ENCODE measurements at regions of chr2 and their contacts with region 1.

Region 1: GRCh38 chr2:223957092-223957851 is at the start of gene MRPL44:
- DNase-seq: peak; percentile 93 to 96 (median 95)
- H3K4me3 ChIP-seq: peak within 1 kb of the TSS; percentile 79 to 85
- H3K4me3 Mint-ChIP-seq: peak within 1 kb of the TSS; percentile 91 to 98 (median 96)
- H3K27ac ChIP-seq: peak within 1 kb of the TSS; percentile 80
- H3K27ac Mint-ChIP-seq: peak within 1 kb of the TSS; percentile 93 to 98 (median 96)
- H3K4me1 ChIP-seq: peaks cover 53% of the 10 kb centered on the region
- H3K4me1 Mint-ChIP-seq: peaks cover 43 to 75% (median 54%) of the 10 kb centered on the region in 4 donors
- H3K27me3 ChIP-seq: no peaks in the 10 kb centered on the region
- H3K27me3 Mint-ChIP-seq: no peaks in the 10 kb centered on the region
- total RNA-seq, gene MRPL44: 20.1 to 22.1 TPM

Region 2: DNA sequence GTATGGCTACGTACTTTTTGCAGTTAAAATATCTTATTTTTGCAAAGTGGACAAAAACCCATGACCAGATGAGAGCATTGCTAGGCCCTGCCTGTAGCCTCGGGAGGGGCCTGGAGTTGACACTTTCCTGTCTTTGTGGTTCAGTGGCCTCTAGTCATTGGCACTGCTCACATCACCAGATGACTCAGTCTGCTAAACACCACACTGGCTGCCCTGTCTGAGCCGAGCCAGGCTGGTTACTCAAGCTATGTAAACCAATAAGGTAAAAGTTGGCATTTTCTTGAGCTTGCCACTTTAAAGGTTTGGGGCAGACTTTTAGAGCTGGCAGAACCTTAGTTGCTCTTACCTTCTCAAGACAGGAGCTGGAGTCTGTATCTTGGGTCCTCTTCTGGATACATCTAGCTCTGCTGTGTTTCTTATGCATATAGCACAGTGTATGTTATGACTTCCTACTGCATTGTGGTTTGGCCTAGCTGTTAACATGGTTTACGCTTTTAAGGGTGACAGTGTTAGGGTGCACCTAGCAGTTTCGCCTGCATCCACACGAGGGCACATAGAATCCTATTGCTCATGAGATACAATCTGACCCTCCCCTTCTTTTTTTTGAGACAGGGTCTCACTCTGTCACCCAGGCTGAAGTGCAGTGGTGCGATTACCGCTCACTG is 196.3 kb before region 1 on chr2:
- CTCF ChIA-PET with region 1: no interaction called
- POLR2A ChIA-PET with region 1: no interaction called
- intact Hi-C with region 1: no loop called
- DNase-seq: peak; percentile 43 to 80 (median 46)
- H3K4me3 ChIP-seq: no peak overlapping the region
- H3K4me3 Mint-ChIP-seq: peak overlapping the region in 5 of 8 donors; percentile 20 to 72 (median 51)
- H3K27ac ChIP-seq: no peak overlapping the region
- H3K27ac Mint-ChIP-seq: peak overlapping the region; percentile 19 to 92 (median 81)
- H3K4me1 ChIP-seq: peaks cover 16% of the 10 kb centered on the region
- H3K4me1 Mint-ChIP-seq: peaks cover 8 to 32% (median 15%) of the 10 kb centered on the region in 4 donors
- H3K27me3 ChIP-seq: no peaks in the 10 kb centered on the region
- H3K27me3 Mint-ChIP-seq: no peaks in the 10 kb centered on the region

Region 3: DNA sequence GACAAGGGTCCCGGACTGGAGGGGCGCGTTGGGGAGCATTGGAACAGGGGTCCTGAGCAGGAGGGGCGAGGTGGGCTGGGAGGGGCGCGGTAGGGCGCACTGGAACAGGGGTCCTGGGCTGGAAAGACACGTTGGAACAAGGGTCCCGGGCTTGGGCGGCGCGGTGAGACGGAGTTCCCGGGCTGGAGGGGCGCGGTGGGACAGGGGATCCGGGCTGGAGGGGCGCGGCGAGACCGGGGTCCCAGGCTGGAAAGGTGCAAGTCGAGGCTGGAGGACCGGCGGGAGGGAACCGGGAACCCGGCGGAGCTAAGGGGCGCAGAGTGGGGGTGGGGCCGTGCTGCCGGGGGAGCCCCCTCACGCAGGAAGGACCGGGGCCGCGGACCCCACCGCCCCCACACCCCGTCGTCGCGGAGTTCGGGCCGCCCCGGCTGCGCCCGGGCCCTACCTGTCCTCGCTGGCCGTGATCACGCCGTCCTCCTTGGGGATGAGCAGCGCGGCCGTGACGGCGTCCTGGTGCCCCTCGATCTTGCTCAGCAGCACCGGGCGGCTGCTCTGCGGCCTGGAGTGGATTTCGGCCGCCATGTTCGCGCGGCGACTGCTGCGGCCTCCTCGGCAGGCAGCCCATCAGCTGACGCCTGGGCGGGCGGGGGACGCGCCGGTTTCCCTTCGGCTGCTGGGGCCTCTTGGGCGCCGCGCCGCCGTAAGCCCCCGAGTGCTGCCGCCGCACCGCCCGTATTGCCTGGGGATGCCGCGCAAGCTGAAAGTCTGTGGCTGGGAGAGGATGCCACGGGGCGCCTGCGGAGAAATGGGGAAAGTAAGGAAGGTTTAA is 12.4 kb before region 1 on chr2 and contains the start of gene WDFY1:
- CTCF ChIA-PET with region 1: interaction called, 7 read pairs
- POLR2A ChIA-PET with region 1: interaction called, 55 read pairs
- intact Hi-C with region 1: loop called (anchors 1 kb)
- DNase-seq: peak; percentile 71 to 79 (median 74)
- H3K4me3 ChIP-seq: peak within 1 kb of the TSS; percentile 20 to 87
- H3K4me3 Mint-ChIP-seq: peak within 1 kb of the TSS; percentile 90 to 95 (median 92)
- H3K27ac ChIP-seq: peak within 1 kb of the TSS; percentile 50
- H3K27ac Mint-ChIP-seq: peak within 1 kb of the TSS; percentile 84 to 95 (median 92)
- H3K4me1 ChIP-seq: peaks cover 46% of the 10 kb centered on the region
- H3K4me1 Mint-ChIP-seq: peaks cover 37 to 70% (median 53%) of the 10 kb centered on the region in 4 donors
- H3K27me3 ChIP-seq: no peaks in the 10 kb centered on the region
- H3K27me3 Mint-ChIP-seq: no peaks in the 10 kb centered on the region
- total RNA-seq, gene WDFY1: 31.5 to 37.7 TPM

Region 4: GRCh38 chr2:224025874-224026273 is 68.6 kb after region 1 on chr2:
- CTCF ChIA-PET with region 1: no interaction called
- POLR2A ChIA-PET with region 1: no interaction called
- intact Hi-C with region 1: loop called (anchors 5 kb)
- DNase-seq: peak; percentile 39 to 80 (median 54)
- H3K4me3 ChIP-seq: no peak overlapping the region
- H3K4me3 Mint-ChIP-seq: peak overlapping the region; percentile 4 to 80 (median 61)
- H3K27ac ChIP-seq: no peak overlapping the region
- H3K27ac Mint-ChIP-seq: peak overlapping the region; percentile 76 to 90 (median 84)
- H3K4me1 ChIP-seq: peaks cover 27% of the 10 kb centered on the region
- H3K4me1 Mint-ChIP-seq: peaks cover 27 to 52% (median 35%) of the 10 kb centered on the region in 4 donors
- H3K27me3 ChIP-seq: no peaks in the 10 kb centered on the region
- H3K27me3 Mint-ChIP-seq: no peaks in the 10 kb centered on the region

Measured in CD4-positive, alpha-beta memory T cell (primary cell).